T-cell (primary cell): ENCODE measurements at regions of chr3 and their contacts with region 1.

Region 1: GRCh38 chr3:71681224-71681668 is 44.0 kb downstream of the EIF4E3 start:
- DNase-seq: peak in 29 of 35 experiments; percentile 6 to 49 (median 23)
- ATAC-seq: peak; percentile 32 to 57 (median 38)
- H3K4me3 ChIP-seq: no peak overlapping the region
- H3K4me3 Mint-ChIP-seq: no peak overlapping the region
- H3K27ac ChIP-seq: no peak overlapping the region
- H3K27ac Mint-ChIP-seq: peak overlapping the region; percentile 36 to 44
- H3K4me1 ChIP-seq: no peaks in the 10 kb centered on the region
- H3K4me1 Mint-ChIP-seq: peaks cover 11 to 24% (median 13%) of the 10 kb centered on the region in 3 donors
- H3K27me3 ChIP-seq: no peaks in the 10 kb centered on the region
- H3K27me3 Mint-ChIP-seq: no peaks in the 10 kb centered on the region

Region 2: DNA sequence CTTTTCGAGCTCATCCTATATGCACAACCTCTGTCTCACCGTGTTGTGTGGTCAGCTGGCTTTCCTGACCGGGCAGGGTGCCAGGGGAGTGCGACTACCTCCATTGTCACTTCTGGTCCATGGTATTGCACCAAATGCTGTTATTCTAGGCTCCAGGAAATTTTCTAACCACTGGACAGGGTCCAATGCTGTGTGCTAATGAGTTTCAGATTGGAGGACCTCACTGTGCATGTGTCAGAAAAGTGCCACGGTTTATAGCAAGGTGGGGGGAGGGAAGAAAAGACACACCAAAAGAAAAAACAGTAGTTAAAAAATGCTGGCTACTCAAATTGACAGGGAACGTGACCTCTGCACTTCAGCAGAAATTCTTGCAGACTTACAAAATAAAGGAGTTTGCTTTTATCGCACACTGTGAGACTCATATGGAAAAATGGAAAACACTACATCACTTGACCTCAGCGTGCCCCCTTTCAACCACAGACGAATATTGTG is 577.8 kb before region 1 on chr3:
- CTCF ChIA-PET with region 1: no interaction called
- POLR2A ChIA-PET with region 1: interaction called in 1 of 2 experiments, 12 read pairs
- DNase-seq: no peak
- ATAC-seq: no peak
- H3K4me3 ChIP-seq: no peak overlapping the region
- H3K4me3 Mint-ChIP-seq: peak overlapping the region in 1 of 3 donors; percentile 15
- H3K27ac ChIP-seq: no peak overlapping the region
- H3K27ac Mint-ChIP-seq: peak overlapping the region; percentile 46 to 83
- H3K4me1 ChIP-seq: peaks cover 15 to 38% of the 10 kb centered on the region in 2 experiments
- H3K4me1 Mint-ChIP-seq: peaks cover 90 to 92% (median 91%) of the 10 kb centered on the region in 3 donors
- H3K27me3 ChIP-seq: no peaks in the 10 kb centered on the region
- H3K27me3 Mint-ChIP-seq: no peaks in the 10 kb centered on the region

Region 3: GRCh38 chr3:71652781-71653413 is 28.3 kb before region 1 on chr3:
- CTCF ChIA-PET with region 1: no interaction called
- POLR2A ChIA-PET with region 1: no interaction called
- DNase-seq: peak in 2 of 35 experiments; percentile 4 to 51
- ATAC-seq: peak in 1 of 4 experiments; percentile 38
- H3K4me3 ChIP-seq: no peak overlapping the region
- H3K4me3 Mint-ChIP-seq: no peak overlapping the region
- H3K27ac ChIP-seq: no peak overlapping the region
- H3K27ac Mint-ChIP-seq: no peak overlapping the region
- H3K4me1 ChIP-seq: no peaks in the 10 kb centered on the region
- H3K4me1 Mint-ChIP-seq: peaks cover 0 to 4% (median 3%) of the 10 kb centered on the region in 3 donors
- H3K27me3 ChIP-seq: no peaks in the 10 kb centered on the region
- H3K27me3 Mint-ChIP-seq: no peaks in the 10 kb centered on the region

Region 4: DNA sequence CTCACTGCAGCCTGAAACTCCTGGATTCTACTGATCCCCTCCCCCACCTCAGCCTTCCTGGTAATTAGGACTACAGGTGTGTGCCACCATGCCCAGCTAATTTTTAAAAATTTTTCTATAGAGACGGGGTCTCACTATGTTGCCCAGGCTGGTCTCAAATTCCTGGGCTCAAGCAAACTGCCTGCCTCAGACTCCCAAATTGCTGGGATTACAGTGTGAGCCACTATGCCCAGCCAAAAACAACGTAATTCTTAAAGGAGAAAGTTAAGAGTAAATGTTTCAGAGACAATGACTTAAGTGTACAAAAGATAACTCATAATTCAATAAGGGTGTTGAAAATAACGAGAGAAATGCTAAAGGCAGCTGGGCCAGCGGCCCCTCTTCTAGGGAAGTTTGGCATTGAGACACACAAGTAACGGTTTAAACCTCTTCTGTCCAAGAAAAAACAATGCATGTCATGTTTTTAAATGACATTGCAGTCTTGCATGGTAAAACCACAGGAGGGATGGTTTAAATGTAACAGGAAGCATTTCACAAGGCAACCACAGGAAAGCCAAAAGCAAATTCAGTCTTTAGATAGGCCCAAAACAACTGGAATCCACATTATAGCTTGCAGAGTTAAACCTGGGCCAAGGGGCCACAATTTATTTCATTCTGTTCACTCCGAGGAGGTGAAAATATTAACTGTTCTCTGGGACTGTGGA is 98.6 kb after region 1 on chr3:
- CTCF ChIA-PET with region 1: interaction called in 1 of 2 experiments, 11 read pairs
- POLR2A ChIA-PET with region 1: no interaction called
- DNase-seq: peak in 1 of 35 experiments; percentile 21
- ATAC-seq: peak in 2 of 4 experiments; percentile 29 to 36
- H3K4me3 ChIP-seq: no peak overlapping the region
- H3K4me3 Mint-ChIP-seq: no peak overlapping the region
- H3K27ac ChIP-seq: no peak overlapping the region
- H3K27ac Mint-ChIP-seq: peak overlapping the region; percentile 30 to 32
- H3K4me1 ChIP-seq: peaks cover 7 to 18% of the 10 kb centered on the region in 2 experiments
- H3K4me1 Mint-ChIP-seq: peaks cover 22 to 24% (median 23%) of the 10 kb centered on the region in 3 donors
- H3K27me3 ChIP-seq: peaks cover 9 to 18% of the 10 kb centered on the region in 2 experiments
- H3K27me3 Mint-ChIP-seq: peaks cover 40 to 58% of the 10 kb centered on the region in 2 donors